Stomach (tissue), 19 donors: ENCODE measurements at regions of chr16 and their contacts with region 1.

Region 1: DNA sequence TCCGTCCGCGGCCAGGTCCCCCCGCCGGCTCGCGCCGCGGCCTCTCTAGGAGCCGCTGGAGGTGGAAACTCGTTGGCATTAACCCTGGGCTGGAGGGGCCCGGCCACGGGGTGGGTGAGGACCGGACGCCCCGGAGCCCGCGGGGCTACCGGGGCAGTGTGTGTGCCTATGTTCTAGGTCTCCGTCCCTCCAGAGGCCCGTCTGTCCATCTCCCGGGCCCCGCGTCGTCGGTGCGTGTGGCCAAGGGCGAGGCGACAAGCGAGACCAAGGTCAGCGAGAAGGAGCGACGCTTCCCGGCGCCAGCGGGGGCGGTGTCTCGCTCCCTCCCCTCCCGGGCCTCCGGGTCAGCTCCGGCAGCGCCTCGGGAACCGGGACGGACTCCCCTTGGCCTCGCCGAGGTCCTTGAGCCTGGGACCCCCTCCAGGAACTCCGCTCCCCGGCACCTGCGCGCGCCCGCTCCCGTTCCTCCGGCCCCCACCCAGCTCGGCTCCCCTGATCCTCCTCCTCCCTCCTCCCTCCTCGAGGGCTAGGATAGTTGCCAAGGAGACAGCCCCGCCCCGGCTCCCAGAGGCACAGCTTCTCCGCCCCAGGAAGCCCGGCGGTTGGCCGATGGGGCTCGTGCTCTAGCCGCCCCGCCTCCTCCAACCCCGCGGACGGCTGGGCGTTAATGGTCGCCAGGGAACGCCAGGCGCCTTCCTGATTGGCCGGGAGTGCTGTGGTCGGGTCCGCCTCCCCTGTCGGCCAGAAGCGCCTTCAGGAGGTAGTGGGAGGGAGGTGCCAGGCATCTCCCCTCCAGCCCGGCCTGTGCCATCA is 663 bp upstream of the ZNF768 start:
- DNase-seq: peak; percentile 99
- H3K4me3 ChIP-seq: peak overlapping the region; percentile 74 to 92 (median 80)
- H3K27ac ChIP-seq: peak overlapping the region; percentile 98 to 100 (median 99)
- H3K4me1 ChIP-seq: peaks cover 15 to 63% (median 43%) of the 10 kb centered on the region in 4 donors
- H3K27me3 ChIP-seq: no peaks in the 10 kb centered on the region
- CTCF ChIP-seq: peak in 5 of 7 experiments; percentile 16 to 47 (median 39)
- EP300 ChIP-seq: no peak
- POLR2A ChIP-seq: peak in 2 of 4 donors; percentile 17 to 43

Region 2: GRCh38 chr16:30429678-30430427 is 97.2 kb before region 1 on chr16 and contains the start of gene DCTPP1:
- intact Hi-C with region 1: loop called (anchors 10 kb)
- DNase-seq: peak; percentile 96 to 99
- H3K4me3 ChIP-seq: peak within 1 kb of the TSS; percentile 69 to 82 (median 74)
- H3K27ac ChIP-seq: peak within 1 kb of the TSS; percentile 83 to 90 (median 85)
- H3K4me1 ChIP-seq: peaks cover 9 to 25% (median 25%) of the 10 kb centered on the region in 4 donors
- H3K27me3 ChIP-seq: no peaks in the 10 kb centered on the region
- CTCF ChIP-seq: peak in 6 of 7 experiments; percentile 29 to 96 (median 76)
- EP300 ChIP-seq: no peak
- POLR2A ChIP-seq: no peak
- total RNA-seq, gene DCTPP1: 15.5 to 47.8 (median 27.1) TPM in 4 of 5 donors, not detected in the other